ENCODE measurements at regions of chr22 and their contacts with region 1.

Region 1: GRCh38 chr22:36144886-36145541 is 15.5 kb downstream of the APOL3 start:
- DNase-seq: peak; percentile 63 to 78
- H3K4me3 ChIP-seq: no peak overlapping the region
- H3K27ac ChIP-seq: no peak overlapping the region
- H3K4me1 ChIP-seq: peaks cover 0 to 21% (median 4%) of the 10 kb centered on the region in 4 donors
- H3K27me3 ChIP-seq: no peaks in the 10 kb centered on the region
- CTCF ChIP-seq: peak; percentile 76 to 86

Region 2: DNA sequence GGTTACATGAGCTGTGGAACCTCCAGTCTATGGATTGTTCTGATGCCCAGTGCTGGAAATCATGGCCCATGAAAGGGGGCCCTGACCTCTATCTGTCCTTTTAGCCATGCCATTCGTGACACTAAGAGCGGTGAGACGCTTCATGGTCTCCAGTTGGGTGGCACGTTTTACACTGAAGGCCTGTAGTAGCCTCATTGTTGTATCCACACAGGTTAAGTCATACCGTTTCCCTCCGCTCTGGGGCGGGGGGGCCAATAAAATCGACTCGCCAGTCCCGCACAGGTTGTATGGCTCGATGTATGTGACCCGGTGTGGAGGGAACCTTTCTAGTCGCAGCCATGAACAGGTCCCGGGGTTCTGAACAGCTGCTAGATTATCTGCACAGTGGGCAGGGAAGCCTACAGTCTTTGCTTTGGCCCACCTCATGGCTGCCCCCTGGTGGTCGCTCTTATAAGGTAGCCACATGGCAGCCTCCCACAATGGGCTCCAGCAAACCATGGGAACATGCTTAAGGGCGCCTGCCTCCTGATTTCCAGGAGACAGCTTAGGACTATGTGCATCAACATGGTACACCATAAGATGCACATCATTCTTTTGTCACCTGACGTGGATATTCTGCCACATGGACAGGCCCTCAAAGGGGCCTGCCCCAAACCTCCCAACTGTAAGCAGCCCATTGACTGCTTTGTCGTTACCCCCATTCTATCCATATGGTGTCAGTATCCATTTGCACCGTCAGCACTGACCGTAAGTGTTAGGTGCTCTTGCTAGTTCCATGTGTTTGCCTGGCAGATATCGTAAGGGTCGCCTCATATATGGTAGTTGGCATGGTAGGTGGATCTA is 35.2 kb after region 1 on chr22:
- intact Hi-C with region 1: loop called (anchors 2 kb)
- DNase-seq: peak; percentile 89 to 91
- H3K4me3 ChIP-seq: no peak overlapping the region
- H3K27ac ChIP-seq: no peak overlapping the region
- H3K4me1 ChIP-seq: peaks cover 0 to 3% (median 0%) of the 10 kb centered on the region in 4 donors
- H3K27me3 ChIP-seq: no peaks in the 10 kb centered on the region
- CTCF ChIP-seq: peak; percentile 89 to 94

Measured in tibial artery (tissue), 4 donors.